PC-9 (cell line): ENCODE measurements at regions of chr17 and their contacts with region 1.

Region 1: GRCh38 chr17:16285957-16286640 is 67.2 kb downstream of the CENPV start:
- DNase-seq: peak; percentile 91 to 94
- H3K4me3 ChIP-seq: peak overlapping the region; percentile 45; the same call in 1 of the 2 replicates
- H3K27ac ChIP-seq: peak overlapping the region; percentile 98
- H3K4me1 ChIP-seq: peaks cover 75% of the 10 kb centered on the region
- H3K27me3 ChIP-seq: no peaks in the 10 kb centered on the region
- CTCF ChIP-seq: peak; percentile 71; the same call in 1 of the 2 replicates

Region 2: DNA sequence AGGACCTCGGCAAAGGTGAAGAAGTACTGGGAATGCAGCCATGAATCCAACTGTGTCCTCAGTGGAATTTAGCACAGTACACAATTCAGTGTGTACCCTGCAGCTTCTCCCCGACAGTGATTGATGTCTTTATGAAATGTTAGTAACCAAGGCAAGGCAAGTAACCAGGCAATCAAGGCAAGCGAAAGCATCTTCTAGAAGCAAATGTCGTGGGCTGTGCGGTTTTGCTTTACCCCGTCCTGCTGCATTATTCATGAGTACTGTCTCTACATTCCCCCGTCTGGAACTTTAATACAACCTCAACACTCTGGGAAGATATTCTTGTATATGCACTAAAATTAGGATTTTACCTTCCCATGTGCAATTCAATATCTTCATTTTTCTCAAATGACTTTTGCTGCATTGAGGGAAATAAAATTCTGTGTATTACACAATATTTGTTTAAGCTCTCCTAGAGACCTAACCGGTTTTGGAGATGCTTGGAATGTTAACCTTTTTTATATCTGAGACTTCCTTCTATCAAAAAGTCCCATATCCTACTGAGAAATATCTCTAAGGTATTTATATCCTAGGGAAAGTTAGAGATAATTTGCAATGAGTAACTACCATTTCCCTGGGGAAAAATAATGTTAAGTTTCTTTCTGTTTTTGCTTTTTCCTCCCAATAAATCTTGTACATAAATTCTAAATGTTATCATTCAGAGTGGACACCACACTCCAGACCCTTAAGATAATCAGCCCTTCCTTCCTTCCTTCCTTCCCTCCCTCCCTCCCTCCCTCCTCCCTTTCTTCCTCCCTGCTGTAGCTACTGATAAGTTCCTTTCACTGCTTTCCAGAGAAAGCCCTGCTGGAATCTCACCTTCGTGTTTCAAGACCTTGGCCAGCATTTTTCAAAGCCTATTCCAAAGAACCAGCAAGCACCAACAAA is 393.1 kb before region 1 on chr17:
- CTCF ChIA-PET with region 1: no interaction called
- POLR2A ChIA-PET with region 1: no interaction called
- intact Hi-C with region 1: loop called (anchors 10 kb)
- DNase-seq: peak; percentile 74 to 92
- H3K4me3 ChIP-seq: peak overlapping the region; percentile 44; the same call in 1 of the 2 replicates
- H3K27ac ChIP-seq: peak overlapping the region; percentile 99
- H3K4me1 ChIP-seq: peaks cover 61% of the 10 kb centered on the region
- H3K27me3 ChIP-seq: no peaks in the 10 kb centered on the region
- CTCF ChIP-seq: no peak

Region 3: DNA sequence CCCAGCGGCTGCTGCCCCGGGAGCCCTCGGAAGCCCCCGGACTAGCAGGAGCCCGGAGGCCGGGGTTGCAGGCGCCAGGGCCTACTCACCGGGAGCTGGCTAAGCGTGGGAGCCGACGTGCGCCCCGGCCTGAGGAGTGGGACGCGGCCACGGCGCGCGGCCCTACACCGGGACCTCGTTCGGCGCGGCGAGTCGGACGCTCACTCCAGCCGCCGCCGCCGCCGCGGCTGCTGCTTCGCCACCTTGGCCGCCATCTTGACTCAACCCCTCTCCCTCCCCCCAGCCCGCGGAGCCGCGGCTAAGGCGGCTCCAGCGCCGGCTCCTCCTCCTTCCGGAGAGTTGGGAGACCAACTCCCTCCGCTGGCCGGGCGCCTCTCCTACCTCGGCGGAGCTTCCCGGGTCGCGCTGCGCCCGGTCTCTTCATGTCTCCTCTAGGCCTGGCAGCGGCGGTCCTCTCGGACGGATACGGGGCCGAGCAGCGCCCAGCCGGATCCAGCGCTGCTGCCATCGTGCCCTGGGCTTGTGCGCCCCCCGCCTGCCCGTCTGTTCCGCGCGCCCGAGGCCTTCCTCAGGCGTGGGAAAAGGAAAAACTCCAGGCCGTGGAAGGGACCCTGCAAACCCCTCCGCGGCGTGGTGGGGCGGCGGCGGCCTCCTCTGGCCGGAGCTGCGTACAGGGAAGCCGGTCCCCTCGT is 70.7 kb before region 1 on chr17 and contains the start of gene NCOR1:
- CTCF ChIA-PET with region 1: interaction called, 3 read pairs
- POLR2A ChIA-PET with region 1: interaction called, 10 read pairs
- intact Hi-C with region 1: loop called (anchors 1 kb)
- DNase-seq: peak; percentile 73 to 93
- H3K4me3 ChIP-seq: peak within 1 kb of the TSS; percentile 92
- H3K27ac ChIP-seq: peak within 1 kb of the TSS; percentile 90
- H3K4me1 ChIP-seq: peaks cover 23% of the 10 kb centered on the region
- H3K27me3 ChIP-seq: no peaks in the 10 kb centered on the region
- CTCF ChIP-seq: no peak; the same call in 1 of the 2 replicates
- total RNA-seq, gene NCOR1: 139 and 171 TPM in 2 replicates

Region 4: DNA sequence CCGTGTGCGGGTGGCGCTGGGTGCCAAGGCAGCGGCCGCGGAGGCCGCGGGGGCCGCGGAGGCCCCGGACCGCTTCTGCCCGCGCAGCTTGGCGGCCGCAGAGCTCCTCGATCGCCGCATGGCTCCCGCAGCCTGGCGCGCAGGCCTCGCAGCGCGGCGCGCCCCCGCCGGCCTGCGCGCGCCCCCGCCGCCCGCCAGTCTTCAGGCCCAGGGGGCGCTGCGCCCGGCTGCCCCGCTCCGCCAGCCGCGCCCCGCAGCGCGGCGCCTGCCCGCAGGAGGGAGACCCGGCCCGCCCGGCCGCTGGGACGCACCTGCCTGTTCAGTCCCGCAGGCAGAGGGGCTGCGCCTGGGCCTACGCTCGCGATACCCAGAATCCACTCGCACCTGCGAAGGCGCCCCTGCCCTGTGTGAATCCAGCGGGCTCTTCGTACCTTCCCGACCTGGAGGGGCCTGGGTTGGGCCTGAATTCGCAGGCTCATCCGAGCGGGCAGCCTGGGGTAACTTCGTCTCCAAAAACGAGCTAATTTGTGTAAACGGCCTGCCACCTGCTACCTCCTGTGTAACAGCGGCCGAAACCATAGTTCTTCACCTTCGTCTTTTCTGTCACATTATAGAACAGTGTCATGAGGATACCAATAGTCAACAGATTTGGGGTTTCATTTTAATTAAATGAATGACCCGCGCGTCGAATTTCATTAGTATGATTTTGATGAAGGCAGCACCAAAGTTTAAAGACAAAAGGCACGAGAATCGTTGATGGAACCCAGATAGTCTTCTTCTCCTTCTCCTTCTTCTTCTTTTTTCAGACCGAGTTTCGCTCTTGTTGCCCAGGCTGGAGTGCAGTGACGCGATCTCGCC is 67.4 kb after region 1 on chr17 and contains the start of gene CENPV:
- CTCF ChIA-PET with region 1: interaction called, 8 read pairs
- POLR2A ChIA-PET with region 1: interaction called, 6 read pairs
- intact Hi-C with region 1: loop called (anchors 5 kb)
- DNase-seq: no peak
- H3K4me3 ChIP-seq: peak within 1 kb of the TSS; percentile 73
- H3K27ac ChIP-seq: no peak within 1 kb of the TSS
- H3K4me1 ChIP-seq: peaks cover 10% of the 10 kb centered on the region
- H3K27me3 ChIP-seq: no peaks in the 10 kb centered on the region
- CTCF ChIP-seq: no peak
- total RNA-seq, gene CENPV: 12.6 and 18.1 TPM in 2 replicates

Region 5: GRCh38 chr17:16391451-16391850 is 105.4 kb after region 1 on chr17:
- CTCF ChIA-PET with region 1: no interaction called
- POLR2A ChIA-PET with region 1: interaction called, 16 read pairs
- intact Hi-C with region 1: no loop called
- DNase-seq: no peak
- H3K4me3 ChIP-seq: no peak overlapping the region
- H3K27ac ChIP-seq: no peak overlapping the region
- H3K4me1 ChIP-seq: no peaks in the 10 kb centered on the region
- H3K27me3 ChIP-seq: no peaks in the 10 kb centered on the region
- CTCF ChIP-seq: no peak

Region 6: GRCh38 chr17:16537130-16537458 is 251.0 kb after region 1 on chr17:
- CTCF ChIA-PET with region 1: no interaction called
- POLR2A ChIA-PET with region 1: no interaction called
- intact Hi-C with region 1: loop called (anchors 10 kb)
- DNase-seq: no peak
- H3K4me3 ChIP-seq: no peak overlapping the region; the same call in 1 of the 2 replicates
- H3K27ac ChIP-seq: no peak overlapping the region
- H3K4me1 ChIP-seq: no peaks in the 10 kb centered on the region
- H3K27me3 ChIP-seq: no peaks in the 10 kb centered on the region
- CTCF ChIP-seq: 0 out of 2 replicates have a peak, but pooled peaks have one; percentile 7